B cell (primary cell): ENCODE measurements at regions of chr1 and their contacts with region 1.

Region 1: DNA sequence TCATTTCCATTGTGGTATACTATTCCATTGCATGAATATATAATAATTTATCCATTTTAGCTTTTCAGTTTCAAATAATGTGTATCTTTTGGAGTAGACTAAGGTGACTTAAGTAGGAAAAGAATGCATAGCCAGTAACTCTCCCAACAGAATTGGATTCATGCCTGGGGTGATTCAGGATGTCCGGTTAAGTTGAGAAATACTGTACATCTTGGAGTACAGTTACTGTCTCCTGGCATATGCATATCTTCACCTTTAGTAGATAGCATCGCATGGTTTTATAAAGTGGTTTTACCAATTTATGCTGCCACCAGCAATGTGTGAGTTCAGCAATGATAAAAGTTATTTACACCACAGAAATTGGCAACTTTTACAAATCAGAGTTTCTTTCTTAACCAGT is 18.6 kb upstream of the SLC6A9 start:
- DNase-seq: no peak
- ATAC-seq: no peak
- H3K4me3 ChIP-seq: no peak overlapping the region
- H3K4me3 Mint-ChIP-seq: no peak overlapping the region
- H3K27ac ChIP-seq: no peak overlapping the region
- H3K27ac Mint-ChIP-seq: no peak overlapping the region
- H3K4me1 ChIP-seq: peaks cover 0 to 3% of the 10 kb centered on the region in 2 donors
- H3K4me1 Mint-ChIP-seq: peaks cover 6% of the 10 kb centered on the region
- H3K27me3 ChIP-seq: peaks cover 0 to 7% (median 0%) of the 10 kb centered on the region in 4 experiments
- H3K27me3 Mint-ChIP-seq: peaks cover 18% of the 10 kb centered on the region
- CTCF ChIP-seq: no peak

Region 2: DNA sequence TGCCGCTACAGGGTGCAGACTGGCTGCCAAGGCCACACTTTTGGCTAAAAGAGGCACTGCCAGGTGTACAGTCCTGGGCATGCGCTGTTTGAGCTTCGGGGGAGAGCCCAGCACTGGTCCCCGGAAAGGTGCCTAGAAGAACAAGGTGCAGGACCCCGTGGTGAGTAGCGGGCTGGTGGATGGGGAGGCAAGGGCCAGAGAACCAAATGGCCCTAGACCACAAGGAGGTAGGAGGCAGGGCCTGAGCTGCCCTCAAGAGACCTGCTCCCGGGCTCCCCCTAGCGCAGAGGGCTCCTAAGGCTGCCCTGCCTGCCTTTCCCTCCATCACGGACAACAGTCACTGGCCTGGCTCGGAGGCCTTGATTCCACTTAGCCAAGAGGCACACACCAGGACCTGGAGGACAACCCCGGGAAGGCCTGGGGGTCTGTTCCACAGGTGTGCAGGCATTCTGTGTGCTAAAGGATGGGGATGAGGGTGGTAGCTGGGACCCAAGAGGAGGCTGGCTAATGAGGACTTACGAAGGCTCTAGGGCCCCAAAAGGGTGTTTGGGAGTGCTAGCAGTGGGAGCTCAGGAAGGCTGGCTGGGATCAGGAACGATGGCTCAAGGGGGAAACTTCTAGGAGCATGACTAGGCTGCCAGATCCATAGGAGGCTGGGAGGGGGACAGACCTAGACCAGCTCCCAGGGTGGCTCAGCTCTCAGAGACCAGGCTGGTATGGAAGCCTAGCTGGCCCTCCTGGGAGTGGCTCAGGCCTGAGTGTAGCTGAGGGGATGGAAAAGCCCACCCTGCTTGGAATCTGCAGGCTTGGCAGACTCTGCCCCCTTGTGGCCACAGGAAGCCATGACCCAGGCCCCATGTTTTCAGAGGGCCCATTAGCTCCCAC is 115.5 kb before region 1 on chr1:
- CTCF ChIA-PET with region 1: interaction called, 17 read pairs
- POLR2A ChIA-PET with region 1: no interaction called
- intact Hi-C with region 1: loop called (anchors 5 kb)
- DNase-seq: peak; percentile 66
- ATAC-seq: peak; percentile 59
- H3K4me3 ChIP-seq: no peak overlapping the region
- H3K4me3 Mint-ChIP-seq: peak overlapping the region; percentile 41
- H3K27ac ChIP-seq: no peak overlapping the region
- H3K27ac Mint-ChIP-seq: no peak overlapping the region
- H3K4me1 ChIP-seq: peaks cover 29 to 30% of the 10 kb centered on the region in 2 donors
- H3K4me1 Mint-ChIP-seq: peaks cover 21% of the 10 kb centered on the region
- H3K27me3 ChIP-seq: peaks cover 0 to 44% (median 26%) of the 10 kb centered on the region in 4 experiments
- H3K27me3 Mint-ChIP-seq: peaks cover 26% of the 10 kb centered on the region
- CTCF ChIP-seq: peak; percentile 69

Region 3: DNA sequence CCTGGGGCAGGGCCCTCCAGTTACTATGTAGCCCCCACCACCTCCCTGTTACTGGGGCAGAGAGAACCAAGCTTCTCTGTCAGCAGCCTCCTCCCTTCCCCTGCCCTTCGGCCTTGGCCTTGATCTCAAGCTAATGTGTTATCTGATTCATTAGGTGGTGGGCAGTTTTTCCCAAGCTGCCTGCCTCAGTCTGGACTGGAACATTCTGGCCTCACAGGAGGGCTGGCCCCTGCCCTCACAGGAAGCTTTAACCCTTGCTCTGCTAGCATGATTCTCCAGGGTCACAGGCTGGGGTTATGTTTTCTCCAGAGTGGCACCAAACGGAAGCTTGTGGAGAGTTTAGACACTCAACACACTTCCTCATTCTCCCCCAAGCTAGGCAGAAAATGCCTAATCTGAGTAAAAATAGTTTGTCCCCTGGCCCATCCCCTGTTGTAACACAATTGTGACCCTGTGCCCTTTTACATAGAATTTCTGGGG is 18.6 kb after region 1 on chr1:
- CTCF ChIA-PET with region 1: interaction called, 18 read pairs
- POLR2A ChIA-PET with region 1: interaction called, 4 read pairs
- intact Hi-C with region 1: no loop called
- DNase-seq: peak; percentile 42
- ATAC-seq: no peak
- H3K4me3 ChIP-seq: no peak overlapping the region
- H3K4me3 Mint-ChIP-seq: peak overlapping the region; percentile 75
- H3K27ac ChIP-seq: peak overlapping the region; percentile 7
- H3K27ac Mint-ChIP-seq: peak overlapping the region; percentile 58
- H3K4me1 ChIP-seq: peaks cover 38% of the 10 kb centered on the region in 2 donors
- H3K4me1 Mint-ChIP-seq: peaks cover 42% of the 10 kb centered on the region
- H3K27me3 ChIP-seq: no peaks in the 10 kb centered on the region
- H3K27me3 Mint-ChIP-seq: no peaks in the 10 kb centered on the region
- CTCF ChIP-seq: no peak